HepG2 (cell line): ENCODE measurements at regions of chr9 and their contacts with region 1.

Region 1: GRCh38 chr9:105414947-105415661 is 32.7 kb upstream of the FSD1L start:
- DNase-seq: peak; percentile 62
- ATAC-seq: no peak
- H3K4me3 ChIP-seq: no peak overlapping the region
- H3K27ac ChIP-seq: no peak overlapping the region
- H3K4me1 ChIP-seq: peaks cover 75% of the 10 kb centered on the region
- H3K27me3 ChIP-seq: no peaks in the 10 kb centered on the region
- CTCF ChIP-seq: peak; percentile 93
- EP300 ChIP-seq: no peak
- POLR2A ChIP-seq: no peak
- RAD21 ChIP-seq: peak; percentile 90

Region 2: DNA sequence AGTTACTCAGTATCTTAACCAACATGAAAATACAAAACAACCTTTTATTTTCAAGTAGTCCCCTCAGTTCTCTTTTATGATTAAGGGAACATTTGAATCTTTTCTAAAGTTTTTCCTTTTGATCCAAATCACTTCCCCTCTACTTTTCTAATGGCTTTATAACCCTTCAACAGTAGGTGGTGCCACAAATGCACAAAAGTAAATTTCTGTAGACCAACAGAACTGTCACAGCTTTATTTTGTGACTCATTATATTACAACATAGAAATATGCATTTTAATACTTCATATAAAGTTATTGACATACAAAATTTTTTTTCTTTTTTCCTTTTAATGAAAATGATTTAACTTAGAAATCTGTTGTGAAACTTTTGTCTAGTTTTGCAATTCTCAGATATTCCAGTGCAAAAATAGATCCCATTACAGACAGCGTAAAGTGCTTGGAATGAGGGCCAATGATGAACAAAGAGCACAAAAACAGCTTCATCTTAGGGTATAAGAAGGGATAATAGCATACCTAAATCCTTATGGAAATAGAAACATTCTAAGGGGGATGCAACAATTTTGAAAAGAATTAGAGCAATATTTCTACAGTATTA is 634.2 kb before region 1 on chr9:
- CTCF ChIA-PET with region 1: no interaction called
- POLR2A ChIA-PET with region 1: no interaction called
- in situ Hi-C with region 1: no loop called
- intact Hi-C with region 1: loop called (anchors 10 kb)
- DNase-seq: no peak
- ATAC-seq: no peak
- H3K4me3 ChIP-seq: no peak overlapping the region
- H3K27ac ChIP-seq: no peak overlapping the region
- H3K4me1 ChIP-seq: no peaks in the 10 kb centered on the region
- H3K27me3 ChIP-seq: no peaks in the 10 kb centered on the region
- CTCF ChIP-seq: peak; percentile 24; the same call in 1 of the 2 replicates
- EP300 ChIP-seq: no peak
- POLR2A ChIP-seq: no peak
- RAD21 ChIP-seq: no peak

Region 3: GRCh38 chr9:104927912-104928740 is 487.0 kb before region 1 on chr9 and contains the start of gene ABCA1:
- CTCF ChIA-PET with region 1: interaction called, 3 read pairs
- POLR2A ChIA-PET with region 1: interaction called, 16 read pairs
- in situ Hi-C with region 1: no loop called
- intact Hi-C with region 1: loop called (anchors 1 kb)
- DNase-seq: peak; percentile 85
- ATAC-seq: peak; percentile 66
- H3K4me3 ChIP-seq: peak within 1 kb of the TSS; percentile 70 to 86 (median 85)
- H3K27ac ChIP-seq: peak within 1 kb of the TSS; percentile 79
- H3K4me1 ChIP-seq: peaks cover 51% of the 10 kb centered on the region
- H3K27me3 ChIP-seq: no peaks in the 10 kb centered on the region; a peak in 1 of 5 replicates
- CTCF ChIP-seq: no peak
- EP300 ChIP-seq: 0 out of 4 replicates have a peak, but pooled peaks of 1 of the 2 experiments have one; percentile 20
- POLR2A ChIP-seq: peak; percentile 81 to 94
- RAD21 ChIP-seq: 0 out of 2 replicates have a peak, but pooled peaks have one; percentile 20
- total RNA-seq, gene ABCA1: 40.0 and 63.8 TPM in 2 replicates

Region 4: GRCh38 chr9:105157130-105157583 is 257.9 kb before region 1 on chr9:
- CTCF ChIA-PET with region 1: interaction called, 19 read pairs
- POLR2A ChIA-PET with region 1: no interaction called
- in situ Hi-C with region 1: loop called (anchors 5 kb)
- intact Hi-C with region 1: loop called (anchors 1 kb)
- DNase-seq: peak; percentile 24
- ATAC-seq: peak; percentile 92
- H3K4me3 ChIP-seq: no peak overlapping the region
- H3K27ac ChIP-seq: no peak overlapping the region
- H3K4me1 ChIP-seq: peaks cover 24% of the 10 kb centered on the region
- H3K27me3 ChIP-seq: no peaks in the 10 kb centered on the region
- CTCF ChIP-seq: peak; percentile 74
- EP300 ChIP-seq: no peak
- POLR2A ChIP-seq: no peak
- RAD21 ChIP-seq: peak; percentile 41; the same call in 1 of the 2 replicates

Region 5: DNA sequence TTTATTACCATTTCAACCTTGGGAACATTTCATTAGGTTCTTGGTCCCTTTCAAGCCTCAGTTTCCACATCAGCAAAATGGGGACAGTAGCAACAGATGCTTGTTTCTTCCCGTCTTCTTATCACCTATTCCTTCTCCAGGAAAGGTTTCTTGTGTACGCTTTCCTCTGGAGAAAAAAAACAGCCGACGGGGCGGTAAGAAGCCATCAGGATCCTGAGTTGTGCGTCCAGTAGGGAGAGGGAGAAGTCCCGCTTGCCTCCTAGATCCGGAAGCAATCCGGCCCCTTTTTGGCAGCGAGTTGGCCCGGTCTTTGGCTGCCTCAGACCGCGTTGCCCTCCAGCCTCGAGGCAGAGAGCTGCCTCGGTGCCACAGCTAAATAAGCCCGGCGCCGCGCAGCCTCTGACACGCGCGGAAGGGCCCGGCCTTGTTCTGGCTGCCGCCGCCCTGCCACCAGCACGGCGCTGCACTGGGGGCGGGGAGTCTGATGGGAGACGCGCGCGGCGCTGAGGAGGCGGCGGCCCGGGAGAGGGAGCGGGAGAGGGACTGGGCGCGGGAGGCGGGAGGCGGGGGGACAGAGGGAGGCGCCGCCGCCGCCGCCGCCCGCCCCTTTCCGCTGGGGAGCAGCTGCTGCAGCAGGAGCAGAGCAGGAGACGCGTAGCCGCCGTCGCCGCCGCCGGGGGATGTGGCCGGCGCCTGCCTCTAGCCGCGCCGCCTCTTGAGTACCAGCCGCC is 170.9 kb before region 1 on chr9 and contains the start of gene SLC44A1:
- CTCF ChIA-PET with region 1: no interaction called
- POLR2A ChIA-PET with region 1: interaction called, 4 read pairs
- in situ Hi-C with region 1: no loop called
- intact Hi-C with region 1: loop called (anchors 2 kb)
- DNase-seq: peak; percentile 86
- ATAC-seq: peak; percentile 97
- H3K4me3 ChIP-seq: peak within 1 kb of the TSS; percentile 93 to 98 (median 97)
- H3K27ac ChIP-seq: peak within 1 kb of the TSS; percentile 68
- H3K4me1 ChIP-seq: peaks cover 63% of the 10 kb centered on the region
- H3K27me3 ChIP-seq: no peaks in the 10 kb centered on the region
- CTCF ChIP-seq: peak; percentile 54; the same call in 1 of the 2 replicates
- EP300 ChIP-seq: peak; percentile 64 to 81; a peak in 3 of 4 replicates
- POLR2A ChIP-seq: peak; percentile 57 to 62
- RAD21 ChIP-seq: peak; percentile 81; the same call in 1 of the 2 replicates
- total RNA-seq, gene SLC44A1: 30.4 and 40.8 TPM in 2 replicates

Region 6: GRCh38 chr9:105432247-105432842 is 17.2 kb after region 1 on chr9:
- CTCF ChIA-PET with region 1: no interaction called
- POLR2A ChIA-PET with region 1: interaction called, 18 read pairs
- in situ Hi-C with region 1: no loop called
- intact Hi-C with region 1: no loop called
- DNase-seq: peak; percentile 70
- ATAC-seq: peak; percentile 91
- H3K4me3 ChIP-seq: no peak overlapping the region; a peak in 1 of 6 replicates
- H3K27ac ChIP-seq: peak overlapping the region; percentile 72
- H3K4me1 ChIP-seq: peaks cover 48% of the 10 kb centered on the region
- H3K27me3 ChIP-seq: no peaks in the 10 kb centered on the region
- CTCF ChIP-seq: no peak
- EP300 ChIP-seq: peak in 1 of 2 experiments; percentile 88; a peak in 2 of 4 replicates
- POLR2A ChIP-seq: no peak
- RAD21 ChIP-seq: no peak

Region 7: DNA sequence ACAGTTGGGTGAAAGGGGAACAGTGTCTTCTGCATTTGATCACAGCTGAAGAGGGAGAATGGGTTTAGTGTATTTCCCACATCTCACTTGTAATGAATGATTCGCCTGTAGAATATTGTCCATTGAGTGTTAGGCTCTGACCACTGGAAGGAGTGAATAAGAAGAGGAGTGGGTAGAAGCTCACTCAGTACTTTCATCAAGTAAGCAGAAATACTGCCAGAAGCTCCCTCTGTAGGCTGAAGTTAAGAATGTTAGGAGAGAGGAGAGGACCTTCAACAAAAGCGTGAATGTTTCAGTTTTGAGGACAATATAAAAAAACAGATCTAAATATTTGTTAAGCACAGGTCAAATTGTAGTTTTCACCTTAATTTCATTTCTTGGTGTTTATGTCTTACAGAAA is 60.2 kb after region 1 on chr9:
- CTCF ChIA-PET with region 1: no interaction called
- POLR2A ChIA-PET with region 1: no interaction called
- in situ Hi-C with region 1: no loop called
- intact Hi-C with region 1: loop called (anchors 2 kb)
- DNase-seq: peak; percentile 39
- ATAC-seq: peak; percentile 88
- H3K4me3 ChIP-seq: no peak overlapping the region
- H3K27ac ChIP-seq: no peak overlapping the region
- H3K4me1 ChIP-seq: 0 out of 2 replicates have a peak, but pooled peaks cover 5% of the 10 kb centered on the region
- H3K27me3 ChIP-seq: no peaks in the 10 kb centered on the region
- CTCF ChIP-seq: peak; percentile 47
- EP300 ChIP-seq: no peak
- POLR2A ChIP-seq: no peak
- RAD21 ChIP-seq: no peak